ENCODE measurements at regions of chr20 and their contacts with region 1.

Region 1: DNA sequence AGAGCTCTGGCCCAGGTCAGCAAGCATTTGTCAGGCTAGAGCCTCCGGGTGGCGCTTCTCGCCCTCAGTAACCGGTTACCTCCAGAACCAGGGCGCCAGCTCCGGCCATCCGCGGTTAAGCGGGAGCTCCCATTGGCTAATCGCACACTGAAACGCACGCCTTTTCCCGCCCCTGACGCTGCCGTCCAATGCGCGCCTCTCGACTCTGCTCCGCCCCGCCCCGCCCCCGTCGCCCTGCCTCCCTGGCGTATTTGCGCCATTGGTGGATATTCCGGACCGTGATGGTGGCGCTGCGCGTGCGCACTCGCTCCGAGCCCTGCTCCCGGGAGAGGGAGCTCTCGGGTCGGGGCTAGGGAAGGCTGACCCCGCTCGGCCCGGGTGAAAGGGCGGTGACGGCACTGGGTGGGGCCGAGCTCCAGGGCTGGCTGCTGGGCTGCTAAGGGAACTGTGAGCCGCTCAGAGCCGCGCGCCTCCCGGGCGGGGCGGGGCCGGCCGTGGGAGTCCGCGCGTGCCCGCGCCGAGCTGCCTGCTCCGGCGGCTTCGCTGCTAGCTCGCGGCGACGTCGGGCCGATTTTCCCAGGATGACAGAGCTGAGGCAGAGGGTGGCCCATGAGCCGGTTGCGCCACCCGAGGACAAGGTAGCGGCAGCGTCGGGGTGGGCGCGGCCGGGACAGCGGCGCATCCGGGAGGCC is at the start of gene CDS2:
- DNase-seq: peak; percentile 100
- ATAC-seq: peak; percentile 92 to 96 (median 94)
- H3K4me3 ChIP-seq: peak within 1 kb of the TSS; percentile 81
- H3K27ac ChIP-seq: peak within 1 kb of the TSS; percentile 98
- H3K4me1 ChIP-seq: peaks cover 40% of the 10 kb centered on the region
- H3K27me3 ChIP-seq: no peaks in the 10 kb centered on the region
- CTCF ChIP-seq: peak; percentile 64
- total RNA-seq, gene CDS2: 18.1 to 34.1 (median 25.2) TPM

Region 2: DNA sequence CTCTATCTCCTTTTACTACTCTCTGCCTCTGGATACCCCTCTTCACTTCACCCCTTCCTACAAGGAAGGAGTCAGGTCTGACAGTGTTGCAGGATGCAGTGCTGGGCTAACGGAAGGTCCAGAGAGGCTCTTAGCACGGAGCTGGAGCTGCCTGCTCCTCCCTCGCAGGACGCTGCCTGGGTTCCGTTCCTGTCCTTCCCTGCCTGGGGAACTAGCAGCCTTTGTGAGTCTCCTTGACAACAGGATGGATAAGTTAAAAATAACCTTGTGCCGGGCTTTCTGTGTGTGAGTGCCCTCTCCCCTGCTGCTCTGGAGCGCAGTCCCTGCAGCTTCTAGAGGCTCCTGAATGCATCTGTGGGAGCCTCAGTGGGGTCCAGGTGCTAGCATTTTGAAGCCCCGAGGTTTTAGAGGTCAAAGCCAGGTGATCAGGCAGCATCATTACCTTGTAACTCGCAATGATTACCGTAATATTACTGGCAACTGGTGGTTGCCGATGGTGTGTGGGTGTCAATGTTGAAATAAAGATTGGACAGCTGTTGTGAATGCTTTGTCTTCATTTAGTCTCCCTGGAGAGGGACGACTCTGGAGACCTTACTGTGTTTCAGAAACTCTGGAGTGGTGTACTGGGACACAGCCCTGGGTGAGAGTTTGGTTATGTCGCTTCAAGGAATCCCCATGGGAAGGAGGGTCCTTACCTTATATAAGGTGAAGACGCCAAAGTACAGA is 44.6 kb after region 1 on chr20:
- intact Hi-C with region 1: loop called (anchors 5 kb)
- DNase-seq: peak in 1 of 2 donors; percentile 22
- ATAC-seq: peak; percentile 38 to 59 (median 54)
- H3K4me3 ChIP-seq: peak overlapping the region; percentile 25
- H3K27ac ChIP-seq: peak overlapping the region; percentile 63
- H3K4me1 ChIP-seq: peaks cover 76% of the 10 kb centered on the region
- H3K27me3 ChIP-seq: no peaks in the 10 kb centered on the region
- CTCF ChIP-seq: no peak

Region 3: GRCh38 chr20:5191829-5192569 is 65.3 kb after region 1 on chr20:
- intact Hi-C with region 1: loop called (anchors 2 kb)
- DNase-seq: no peak
- ATAC-seq: peak; percentile 56 to 84 (median 80)
- H3K4me3 ChIP-seq: no peak overlapping the region
- H3K27ac ChIP-seq: peak overlapping the region; percentile 51
- H3K4me1 ChIP-seq: peaks cover 11% of the 10 kb centered on the region
- H3K27me3 ChIP-seq: no peaks in the 10 kb centered on the region
- CTCF ChIP-seq: peak; percentile 77

Region 4: GRCh38 chr20:5448449-5449118 is 321.9 kb after region 1 on chr20:
- intact Hi-C with region 1: no loop called
- DNase-seq: no peak
- ATAC-seq: peak in 1 of 4 donors; percentile 58
- H3K4me3 ChIP-seq: no peak overlapping the region
- H3K27ac ChIP-seq: no peak overlapping the region
- H3K4me1 ChIP-seq: no peaks in the 10 kb centered on the region
- H3K27me3 ChIP-seq: peaks cover 0 to 4% (median 0%) of the 10 kb centered on the region in 3 donors
- CTCF ChIP-seq: peak; percentile 55